Psoas muscle (tissue), 8 donors: ENCODE measurements at regions of chr22 and their contacts with region 1.

Region 1: DNA sequence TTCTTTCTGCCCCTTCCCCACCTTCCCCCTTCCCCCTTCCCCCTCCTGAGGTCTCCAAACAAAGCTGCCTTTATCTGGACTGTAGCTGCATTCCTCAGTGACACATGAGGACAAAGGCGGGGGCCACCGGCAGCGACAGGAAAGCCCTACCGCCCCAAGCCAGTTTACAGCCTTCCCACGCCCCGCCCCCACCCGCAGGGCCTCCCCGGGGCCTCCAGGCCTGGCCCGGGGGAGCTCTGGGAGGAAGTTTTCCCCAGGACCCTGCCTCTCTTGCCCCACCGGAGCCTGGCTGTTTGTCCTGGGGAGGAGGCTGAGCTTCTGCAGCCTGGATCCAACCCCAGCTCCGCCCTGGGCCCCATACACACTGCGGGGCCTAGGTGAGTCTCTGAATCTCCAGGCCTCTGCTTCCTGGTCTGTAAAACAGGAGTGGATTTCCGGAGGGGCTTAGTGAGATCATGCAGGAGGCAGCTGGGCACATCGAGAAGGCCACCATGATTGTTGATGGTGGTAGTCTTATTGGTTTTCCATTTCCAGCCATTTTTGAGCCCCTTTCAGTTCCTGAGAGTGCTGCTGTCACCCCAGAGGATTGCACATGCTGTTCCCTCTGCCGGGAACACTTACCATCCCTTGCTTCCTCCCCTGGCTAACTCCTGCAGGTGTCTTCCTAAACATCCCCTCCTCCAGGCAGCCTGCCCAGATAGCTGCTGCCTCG is 130.7 kb downstream of the MN1 start:
- DNase-seq: peak; percentile 50 to 70
- ATAC-seq: peak in 2 of 4 donors; percentile 12 to 41
- H3K4me3 ChIP-seq: no peak overlapping the region
- H3K27ac ChIP-seq: peak overlapping the region; percentile 88
- H3K4me1 ChIP-seq: peaks cover 35% of the 10 kb centered on the region
- H3K27me3 ChIP-seq: no peaks in the 10 kb centered on the region
- CTCF ChIP-seq: no peak

Region 2: GRCh38 chr22:27641049-27641795 is 29.6 kb before region 1 on chr22:
- intact Hi-C with region 1: loop called in 1 of 2 experiments (anchors 2 kb)
- DNase-seq: no peak
- ATAC-seq: peak; percentile 43 to 65 (median 55)
- H3K4me3 ChIP-seq: no peak overlapping the region
- H3K27ac ChIP-seq: peak overlapping the region; percentile 97
- H3K4me1 ChIP-seq: peaks cover 62% of the 10 kb centered on the region
- H3K27me3 ChIP-seq: no peaks in the 10 kb centered on the region
- CTCF ChIP-seq: no peak